CD14-positive monocyte (primary cell): ENCODE measurements at regions of chr11 and their contacts with region 1.

Region 1: DNA sequence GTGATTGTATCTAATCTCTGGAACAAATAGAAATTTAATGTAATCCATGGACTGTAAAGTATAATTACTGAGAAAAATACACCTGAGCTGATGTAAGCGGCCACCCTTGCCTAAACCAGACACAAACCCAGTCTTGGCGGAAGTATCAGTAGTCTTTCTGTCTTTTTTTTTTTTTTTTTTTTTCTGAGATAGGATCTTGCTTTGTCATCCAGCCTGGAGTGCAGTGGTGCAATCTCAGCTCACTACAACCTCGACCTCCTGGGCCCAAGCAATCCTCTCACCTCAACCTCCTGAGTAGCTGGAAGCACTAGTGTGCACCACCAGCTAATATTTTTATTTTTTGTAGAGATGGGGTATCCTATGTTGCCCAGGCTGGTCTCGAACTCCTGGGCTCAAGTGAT is 5.5 kb upstream of the CXCR5 start:
- DNase-seq: peak in 2 of 3 donors; percentile 41 to 55
- H3K4me3 ChIP-seq: no peak overlapping the region
- H3K4me3 Mint-ChIP-seq: no peak overlapping the region
- H3K27ac ChIP-seq: peak overlapping the region in 1 of 2 donors; percentile 27
- H3K27ac Mint-ChIP-seq: peak overlapping the region in 3 of 7 donors; percentile 67 to 86 (median 72)
- H3K4me1 ChIP-seq: peaks cover 33 to 37% of the 10 kb centered on the region in 2 donors
- H3K4me1 Mint-ChIP-seq: peaks cover 42% of the 10 kb centered on the region
- H3K27me3 ChIP-seq: no peaks in the 10 kb centered on the region
- H3K27me3 Mint-ChIP-seq: peaks cover 10 to 15% (median 14%) of the 10 kb centered on the region in 3 donors
- CTCF ChIP-seq: no peak

Region 2: DNA sequence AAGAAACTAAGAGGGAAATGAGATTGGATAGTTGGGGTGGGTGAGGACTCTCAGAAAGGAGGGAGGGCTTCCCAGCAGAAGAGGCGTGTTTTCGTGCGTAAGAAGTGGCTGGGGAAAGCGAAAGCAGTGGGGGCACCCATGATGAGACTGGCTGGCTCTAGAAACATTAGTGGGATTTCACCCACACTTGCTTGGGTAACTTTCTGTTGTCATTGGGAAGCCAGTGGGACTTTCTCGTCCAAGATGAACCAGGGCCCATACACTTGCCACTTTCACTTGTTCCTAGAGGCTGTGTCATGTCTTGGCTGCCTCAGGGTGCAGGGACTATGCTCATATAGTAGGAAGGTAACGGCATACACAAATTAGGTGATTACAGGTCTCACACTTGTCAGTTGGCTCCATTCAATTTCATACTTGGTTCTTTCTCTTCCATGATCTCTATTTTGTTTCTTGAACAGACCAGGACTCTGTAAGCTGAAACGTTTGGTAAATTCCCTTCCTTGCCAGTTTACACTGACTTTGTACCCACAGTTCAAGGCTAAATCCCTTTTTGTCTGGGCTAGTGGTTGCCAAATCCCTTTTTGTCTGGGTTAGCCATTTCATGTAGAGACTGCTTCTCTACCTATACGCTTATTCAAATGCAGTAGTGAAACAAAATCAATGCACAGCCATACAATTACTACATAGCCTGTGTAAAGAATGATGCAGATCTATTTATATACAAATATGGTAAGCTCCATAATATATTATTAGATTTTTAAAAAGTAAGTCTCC is 36.5 kb before region 1 on chr11:
- intact Hi-C with region 1: loop called in 1 of 2 experiments (anchors 5 kb)
- DNase-seq: no peak
- H3K4me3 ChIP-seq: no peak overlapping the region
- H3K4me3 Mint-ChIP-seq: no peak overlapping the region
- H3K27ac ChIP-seq: no peak overlapping the region
- H3K27ac Mint-ChIP-seq: peak overlapping the region in 1 of 7 donors; percentile 0
- H3K4me1 ChIP-seq: peaks cover 8 to 11% of the 10 kb centered on the region in 2 donors
- H3K4me1 Mint-ChIP-seq: peaks cover 26% of the 10 kb centered on the region
- H3K27me3 ChIP-seq: no peaks in the 10 kb centered on the region
- H3K27me3 Mint-ChIP-seq: peaks cover 0 to 2% (median under 1%) of the 10 kb centered on the region in 3 donors
- CTCF ChIP-seq: no peak

Region 3: GRCh38 chr11:119057000-119057769 is 179.0 kb after region 1 on chr11 and contains the start of gene HYOU1:
- intact Hi-C with region 1: no loop called
- DNase-seq: peak; percentile 96 to 97 (median 97)
- H3K4me3 ChIP-seq: peak within 1 kb of the TSS; percentile 71 to 91 (median 88)
- H3K4me3 Mint-ChIP-seq: peak within 1 kb of the TSS; percentile 93 to 94
- H3K27ac ChIP-seq: peak within 1 kb of the TSS; percentile 69 to 94
- H3K27ac Mint-ChIP-seq: peak within 1 kb of the TSS; percentile 89 to 96 (median 96)
- H3K4me1 ChIP-seq: peaks cover 17 to 22% of the 10 kb centered on the region in 2 donors
- H3K4me1 Mint-ChIP-seq: peaks cover 21% of the 10 kb centered on the region
- H3K27me3 ChIP-seq: no peaks in the 10 kb centered on the region
- H3K27me3 Mint-ChIP-seq: peaks cover 0 to 1% (median 0%) of the 10 kb centered on the region in 3 donors
- CTCF ChIP-seq: no peak
- polyA plus RNA-seq, gene HYOU1: 8.4 to 34.9 (median 8.6) TPM